A549 (cell line): ENCODE measurements at regions of chr17 and their contacts with region 1.

Region 1: DNA sequence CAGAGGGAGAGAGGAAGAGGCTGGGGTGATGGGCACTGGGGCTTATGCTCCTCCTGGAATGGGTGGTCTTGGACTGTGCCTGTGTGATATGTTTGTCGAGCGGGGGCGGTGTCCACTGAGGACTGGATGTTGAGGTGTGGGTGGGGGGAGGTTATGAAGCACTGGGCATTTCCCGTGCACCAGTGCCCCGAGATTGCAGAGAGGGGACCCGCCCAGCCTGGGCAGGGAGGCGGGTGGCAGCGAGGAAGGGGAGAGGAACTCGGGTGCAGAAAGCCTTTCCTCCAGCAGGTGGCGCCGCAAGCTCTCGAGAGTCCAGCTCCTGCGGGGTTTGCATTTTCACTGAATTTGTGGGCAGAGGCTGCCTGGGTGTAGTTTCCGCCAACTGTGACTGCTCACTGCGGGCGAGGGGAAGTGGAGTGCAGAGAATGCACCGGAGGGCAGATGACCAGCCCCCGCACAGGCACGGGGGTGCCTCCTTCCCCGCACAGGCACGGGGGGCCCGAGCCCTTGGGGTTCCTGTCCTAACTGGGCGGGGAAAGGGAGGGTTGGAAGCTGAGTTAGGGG is 190.6 kb downstream of the SEC14L1 start:
- DNase-seq: peak; percentile 83 to 97
- ATAC-seq: peak; percentile 76 to 87
- H3K4me3 ChIP-seq: no peak overlapping the region
- H3K27ac ChIP-seq: peak overlapping the region; percentile 50 to 83
- H3K4me1 ChIP-seq: peaks cover 56% of the 10 kb centered on the region
- CTCF ChIP-seq: peak; percentile 97
- EP300 ChIP-seq: no peak
- POLR2A ChIP-seq: no peak
- RAD21 ChIP-seq: peak; percentile 98 to 99

Region 2: DNA sequence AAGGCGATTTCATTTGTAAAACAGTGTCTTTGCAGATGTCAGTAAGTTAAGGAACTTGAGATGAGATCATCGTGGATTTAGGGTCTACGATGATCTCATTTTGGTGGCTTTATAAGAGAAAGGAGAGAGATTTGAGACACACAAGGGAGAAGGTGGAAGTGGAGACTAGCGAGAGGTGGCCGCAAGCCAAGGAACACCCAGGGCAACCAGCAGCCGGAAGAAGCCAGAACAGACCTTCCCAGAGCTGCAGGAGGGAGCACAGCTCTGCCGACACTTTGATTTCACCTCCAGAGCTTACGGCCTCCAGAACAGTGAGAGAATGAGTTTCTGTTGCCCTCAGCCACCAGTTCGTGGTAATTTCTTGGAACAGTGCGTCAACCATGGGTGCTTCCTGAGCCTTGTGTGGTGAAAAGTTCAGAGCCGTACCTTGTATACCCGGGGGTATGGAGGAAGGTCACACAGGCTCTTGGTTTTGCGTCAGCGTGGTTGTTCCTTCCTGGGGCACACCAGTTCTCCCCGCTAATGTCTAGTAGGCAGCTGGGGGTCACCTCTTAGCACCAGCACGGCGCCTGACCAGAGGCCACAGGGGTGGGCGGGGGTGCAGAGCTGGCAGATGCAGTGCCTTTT is 203.5 kb before region 1 on chr17:
- CTCF ChIA-PET with region 1: no interaction called
- POLR2A ChIA-PET with region 1: no interaction called
- DNase-seq: no peak
- ATAC-seq: no peak
- H3K4me3 ChIP-seq: no peak overlapping the region
- H3K27ac ChIP-seq: peak overlapping the region; percentile 3 to 36; a peak in 4 of 6 replicates
- H3K4me1 ChIP-seq: peaks cover 66% of the 10 kb centered on the region
- CTCF ChIP-seq: no peak
- EP300 ChIP-seq: no peak
- POLR2A ChIP-seq: no peak
- RAD21 ChIP-seq: no peak

Region 3: DNA sequence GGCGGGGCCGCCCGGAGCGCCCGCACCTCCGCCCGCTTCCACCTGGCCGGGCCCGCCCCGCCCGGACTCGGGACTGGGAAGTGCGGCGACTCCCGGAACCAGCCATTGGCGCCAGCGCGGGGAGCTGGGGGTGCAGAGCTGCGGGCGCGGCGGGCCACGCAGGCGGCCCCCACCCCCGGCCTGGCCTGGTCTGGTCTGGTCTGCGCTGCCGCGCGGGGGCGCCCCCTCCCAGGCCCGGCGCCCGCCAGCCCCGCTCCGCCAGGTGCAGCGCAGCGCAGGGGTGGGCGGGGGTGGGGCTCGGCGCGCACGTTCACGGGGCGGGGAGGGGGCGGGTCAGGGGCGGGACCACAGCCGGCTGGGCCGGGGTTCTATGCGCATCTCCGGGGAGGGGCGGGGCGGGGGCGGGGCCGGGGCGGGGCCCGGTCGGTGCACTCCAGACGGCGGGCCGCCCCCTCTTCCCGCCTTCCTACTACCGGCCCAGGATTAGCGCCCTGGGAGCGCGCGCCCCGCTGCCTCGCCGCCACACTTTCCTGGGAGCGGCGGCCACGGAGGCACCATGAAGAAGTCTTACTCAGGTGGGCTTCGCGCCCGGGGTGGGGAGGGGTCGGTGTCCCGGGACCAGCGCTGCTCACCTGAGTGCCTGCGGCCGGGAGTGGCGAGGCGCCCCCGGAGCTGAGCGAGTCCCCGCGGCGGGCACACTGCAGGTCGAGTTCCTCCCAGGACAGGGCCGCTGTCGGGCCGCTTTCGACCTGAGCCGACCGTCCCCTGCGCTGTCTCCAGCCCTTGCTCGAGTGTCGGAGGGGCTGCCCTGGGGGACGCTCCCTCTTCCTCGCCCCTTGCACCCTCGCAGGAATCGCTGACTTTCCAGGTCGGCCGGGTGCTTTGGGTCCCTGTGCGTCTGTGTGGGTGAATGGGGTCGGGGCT is 50.1 kb before region 1 on chr17:
- CTCF ChIA-PET with region 1: interaction called, 24 read pairs
- POLR2A ChIA-PET with region 1: interaction called, 4 read pairs
- DNase-seq: peak; percentile 86 to 93
- ATAC-seq: peak; percentile 58 to 60
- H3K4me3 ChIP-seq: peak overlapping the region; percentile 81
- H3K27ac ChIP-seq: peak overlapping the region; percentile 92 to 94
- H3K4me1 ChIP-seq: peaks cover 44% of the 10 kb centered on the region
- CTCF ChIP-seq: peak; percentile 93
- EP300 ChIP-seq: no peak
- POLR2A ChIP-seq: peak; percentile 70
- RAD21 ChIP-seq: peak; percentile 52 to 92; a peak in 4 of 5 replicates

Region 4: DNA sequence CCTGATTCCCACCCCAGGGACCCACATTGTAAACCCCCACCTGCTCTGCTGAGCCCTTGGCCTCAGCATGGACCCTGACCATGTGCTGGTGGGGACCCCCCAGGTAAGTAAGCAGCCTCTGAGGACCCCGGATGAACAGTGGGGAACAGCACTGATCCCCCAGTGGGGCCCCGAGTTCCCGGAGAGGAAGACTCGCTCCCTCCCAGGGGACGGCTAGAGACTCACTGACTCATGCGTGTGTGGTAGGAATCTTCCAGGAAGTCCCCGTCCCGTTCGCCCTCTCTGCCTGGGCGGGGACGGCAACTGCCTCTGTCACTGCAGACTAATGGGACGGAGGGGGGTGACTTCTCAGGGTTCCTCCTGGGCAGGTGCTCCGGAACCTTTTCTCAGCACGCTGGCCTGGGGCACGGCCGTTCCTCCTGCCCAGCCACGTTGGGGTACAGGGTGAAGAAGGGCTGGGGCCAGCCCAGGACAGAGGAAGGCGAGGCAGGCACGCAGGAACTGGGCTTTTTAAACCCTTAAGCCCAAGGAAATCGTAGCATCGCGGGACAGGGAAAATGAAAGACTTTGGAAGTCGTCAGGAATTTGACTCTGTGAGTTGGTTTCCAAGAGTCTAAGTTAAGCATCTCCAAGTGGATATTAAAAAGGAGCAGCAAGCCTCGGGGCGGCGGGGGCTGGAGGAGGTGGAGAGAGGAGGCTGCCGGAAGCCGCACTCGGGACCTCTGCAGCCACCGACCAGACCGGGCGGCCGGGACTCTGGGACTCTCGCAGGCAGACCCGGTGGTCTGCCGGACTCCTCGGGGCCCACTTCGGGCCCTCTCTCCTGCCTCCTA is 12.0 kb before region 1 on chr17:
- CTCF ChIA-PET with region 1: interaction called, 14 read pairs
- POLR2A ChIA-PET with region 1: no interaction called
- DNase-seq: peak; percentile 93 to 95
- ATAC-seq: peak; percentile 69 to 76
- H3K4me3 ChIP-seq: peak overlapping the region; percentile 64
- H3K27ac ChIP-seq: peak overlapping the region; percentile 93 to 98
- H3K4me1 ChIP-seq: peaks cover 81% of the 10 kb centered on the region
- CTCF ChIP-seq: no peak
- EP300 ChIP-seq: 0 out of 5 replicates have a peak, but pooled peaks of 1 of the 2 experiments have one; percentile 30
- POLR2A ChIP-seq: peak; percentile 46; the same call in 1 of the 2 replicates
- RAD21 ChIP-seq: no peak

Region 5: GRCh38 chr17:77365584-77366186 is 34.3 kb after region 1 on chr17:
- CTCF ChIA-PET with region 1: interaction called, 43 read pairs
- POLR2A ChIA-PET with region 1: no interaction called
- DNase-seq: peak; percentile 76 to 80
- ATAC-seq: peak; percentile 74 to 81
- H3K4me3 ChIP-seq: peak overlapping the region; percentile 3; the same call in 2 of the 3 replicates
- H3K27ac ChIP-seq: peak overlapping the region; percentile 82 to 87
- H3K4me1 ChIP-seq: peaks cover 78% of the 10 kb centered on the region
- CTCF ChIP-seq: no peak
- EP300 ChIP-seq: no peak
- POLR2A ChIP-seq: no peak
- RAD21 ChIP-seq: no peak

Region 6: DNA sequence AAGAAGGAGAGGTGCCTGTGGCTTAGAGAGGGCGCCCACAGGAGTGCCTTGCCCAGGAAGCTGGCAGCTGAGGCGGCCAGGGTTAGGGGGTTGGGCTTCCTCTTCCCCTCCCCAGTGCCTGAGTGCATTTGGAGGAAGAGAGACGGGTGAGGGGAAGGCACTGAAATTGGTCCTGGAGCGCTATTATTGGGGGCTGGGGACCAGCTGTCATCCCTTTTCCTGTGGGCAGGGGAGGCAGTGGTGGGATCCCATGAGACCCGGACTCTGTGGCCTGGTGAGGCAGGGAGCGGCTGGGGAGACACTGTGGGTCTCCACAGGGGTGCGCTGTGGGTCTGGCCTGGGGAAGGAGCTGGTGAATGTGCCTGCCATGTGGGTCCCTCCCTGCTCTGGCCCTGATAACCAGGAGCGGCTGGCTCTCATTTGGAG is 69.1 kb after region 1 on chr17:
- CTCF ChIA-PET with region 1: interaction called, 11 read pairs
- POLR2A ChIA-PET with region 1: no interaction called
- DNase-seq: no peak
- ATAC-seq: peak; percentile 62 to 76; a peak in 5 of 6 replicates
- H3K4me3 ChIP-seq: no peak overlapping the region
- H3K27ac ChIP-seq: peak overlapping the region in 1 of 2 experiments; percentile 33; a peak in 3 of 6 replicates
- H3K4me1 ChIP-seq: peaks cover 14% of the 10 kb centered on the region; the same call in 1 of the 3 replicates
- CTCF ChIP-seq: peak; percentile 18; the same call in 2 of the 3 replicates
- EP300 ChIP-seq: no peak
- POLR2A ChIP-seq: no peak
- RAD21 ChIP-seq: peak; percentile 43 to 58; a peak in 3 of 5 replicates

Region 7: DNA sequence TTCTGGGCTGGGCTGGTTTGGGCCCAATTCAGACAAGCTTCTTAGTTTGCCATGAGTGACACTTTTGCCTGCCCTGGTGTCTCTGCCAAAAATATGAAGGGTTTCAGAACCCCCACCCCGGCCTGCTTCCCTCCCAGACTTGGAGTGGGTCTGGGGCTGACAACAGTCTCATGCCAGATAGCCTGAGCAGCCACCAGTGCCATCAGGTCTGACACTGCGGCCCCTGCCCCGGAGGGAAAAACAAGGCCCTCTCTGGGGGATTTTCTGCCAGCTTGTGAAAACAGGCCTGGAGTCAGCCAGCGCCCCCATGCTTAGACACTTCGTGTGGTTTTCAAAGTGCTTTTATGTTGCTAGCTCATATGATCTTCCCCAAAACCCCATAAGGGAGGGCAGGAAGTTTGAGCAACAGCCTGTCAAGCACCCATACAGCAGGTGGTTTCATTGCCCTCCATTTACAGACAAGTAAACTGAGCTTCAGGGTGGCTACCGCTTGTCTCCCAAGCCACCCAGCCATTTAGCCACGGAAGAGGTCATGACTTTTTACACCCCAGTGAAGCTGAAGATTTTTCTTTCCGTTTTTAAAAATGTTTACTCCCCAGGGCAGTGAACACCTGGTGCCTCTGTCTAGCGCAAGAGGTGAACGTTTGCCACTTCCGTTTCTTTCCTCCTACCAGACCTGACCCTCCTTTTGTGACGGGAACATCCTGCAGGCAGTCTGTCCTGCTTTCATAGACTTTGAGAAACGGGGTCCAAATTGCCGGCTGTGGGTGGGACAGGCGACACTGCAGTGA is 109.9 kb after region 1 on chr17:
- CTCF ChIA-PET with region 1: interaction called, 28 read pairs
- POLR2A ChIA-PET with region 1: no interaction called
- DNase-seq: no peak
- ATAC-seq: no peak
- H3K4me3 ChIP-seq: no peak overlapping the region
- H3K27ac ChIP-seq: no peak overlapping the region
- H3K4me1 ChIP-seq: peaks cover 8% of the 10 kb centered on the region; the same call in 1 of the 3 replicates
- CTCF ChIP-seq: no peak
- EP300 ChIP-seq: no peak
- POLR2A ChIP-seq: no peak
- RAD21 ChIP-seq: no peak

Region 8: DNA sequence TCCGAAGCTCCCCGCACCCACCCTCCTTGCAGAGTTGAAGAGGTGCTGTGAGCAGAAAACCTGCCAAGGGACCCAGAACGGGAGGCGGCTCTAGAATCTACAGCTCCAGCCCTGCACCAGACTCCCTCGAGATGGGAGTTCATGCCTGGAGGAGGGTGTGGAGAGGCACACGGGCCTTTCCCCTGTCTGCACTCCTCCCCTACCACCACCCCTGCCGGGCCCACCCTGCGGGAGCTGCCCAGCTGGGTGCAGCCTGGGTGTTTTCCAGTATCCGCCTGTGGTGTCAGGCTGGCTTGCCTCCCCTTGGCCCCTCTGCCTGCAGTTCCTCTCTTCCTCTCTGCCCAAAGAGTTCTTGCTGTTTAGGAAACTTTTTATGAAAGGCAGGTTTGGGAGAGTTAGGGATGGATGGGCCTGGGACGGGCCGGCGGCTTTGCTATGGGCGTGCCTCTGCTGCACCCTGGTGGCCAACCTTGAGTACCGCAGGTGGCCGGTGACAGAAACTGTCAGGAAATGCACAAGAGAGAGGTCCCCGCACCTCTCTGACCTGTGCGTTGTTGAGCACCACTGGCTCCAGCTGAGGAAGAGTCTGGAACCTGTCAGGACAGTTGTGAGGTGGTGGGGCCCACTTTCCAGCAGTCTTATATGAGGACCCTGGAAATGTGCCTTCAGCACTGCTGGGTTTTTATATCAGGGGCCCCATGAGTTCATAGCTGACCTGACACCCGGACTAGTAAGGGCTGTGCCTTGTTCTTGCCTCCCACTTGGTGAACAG is 163.5 kb after region 1 on chr17:
- CTCF ChIA-PET with region 1: interaction called, 229 read pairs
- POLR2A ChIA-PET with region 1: interaction called, 4 read pairs
- DNase-seq: peak; percentile 77 to 92
- ATAC-seq: peak; percentile 60 to 83
- H3K4me3 ChIP-seq: no peak overlapping the region
- H3K27ac ChIP-seq: peak overlapping the region in 1 of 2 experiments; percentile 37; a peak in 2 of 6 replicates
- H3K4me1 ChIP-seq: no peaks in the 10 kb centered on the region
- CTCF ChIP-seq: peak; percentile 94
- EP300 ChIP-seq: no peak
- POLR2A ChIP-seq: no peak
- RAD21 ChIP-seq: peak; percentile 97 to 98